ENCODE measurements at regions of chr2 and their contacts with region 1.

Region 1: GRCh38 chr2:118130385-118130784 is 42.1 kb downstream of the INSIG2 start:
- DNase-seq: no peak
- H3K4me3 Mint-ChIP-seq: no peak overlapping the region
- H3K27ac Mint-ChIP-seq: peak overlapping the region; percentile 14
- H3K4me1 Mint-ChIP-seq: peaks cover 10% of the 10 kb centered on the region
- H3K27me3 Mint-ChIP-seq: peaks cover 9% of the 10 kb centered on the region

Region 2: GRCh38 chr2:118056165-118056534 is 74.2 kb before region 1 on chr2:
- intact Hi-C with region 1: no loop called
- DNase-seq: no peak
- H3K4me3 Mint-ChIP-seq: no peak overlapping the region
- H3K27ac Mint-ChIP-seq: no peak overlapping the region
- H3K4me1 Mint-ChIP-seq: peaks cover 5% of the 10 kb centered on the region
- H3K27me3 Mint-ChIP-seq: peaks cover 37% of the 10 kb centered on the region

Region 3: GRCh38 chr2:118177884-118178283 is 47.5 kb after region 1 on chr2:
- intact Hi-C with region 1: loop called (anchors 5 kb)
- DNase-seq: no peak
- H3K4me3 Mint-ChIP-seq: peak overlapping the region; percentile 60
- H3K27ac Mint-ChIP-seq: peak overlapping the region; percentile 94
- H3K4me1 Mint-ChIP-seq: peaks cover 28% of the 10 kb centered on the region
- H3K27me3 Mint-ChIP-seq: peaks cover 3% of the 10 kb centered on the region